ENCODE measurements at regions of chr20 and their contacts with region 1.

Region 1: DNA sequence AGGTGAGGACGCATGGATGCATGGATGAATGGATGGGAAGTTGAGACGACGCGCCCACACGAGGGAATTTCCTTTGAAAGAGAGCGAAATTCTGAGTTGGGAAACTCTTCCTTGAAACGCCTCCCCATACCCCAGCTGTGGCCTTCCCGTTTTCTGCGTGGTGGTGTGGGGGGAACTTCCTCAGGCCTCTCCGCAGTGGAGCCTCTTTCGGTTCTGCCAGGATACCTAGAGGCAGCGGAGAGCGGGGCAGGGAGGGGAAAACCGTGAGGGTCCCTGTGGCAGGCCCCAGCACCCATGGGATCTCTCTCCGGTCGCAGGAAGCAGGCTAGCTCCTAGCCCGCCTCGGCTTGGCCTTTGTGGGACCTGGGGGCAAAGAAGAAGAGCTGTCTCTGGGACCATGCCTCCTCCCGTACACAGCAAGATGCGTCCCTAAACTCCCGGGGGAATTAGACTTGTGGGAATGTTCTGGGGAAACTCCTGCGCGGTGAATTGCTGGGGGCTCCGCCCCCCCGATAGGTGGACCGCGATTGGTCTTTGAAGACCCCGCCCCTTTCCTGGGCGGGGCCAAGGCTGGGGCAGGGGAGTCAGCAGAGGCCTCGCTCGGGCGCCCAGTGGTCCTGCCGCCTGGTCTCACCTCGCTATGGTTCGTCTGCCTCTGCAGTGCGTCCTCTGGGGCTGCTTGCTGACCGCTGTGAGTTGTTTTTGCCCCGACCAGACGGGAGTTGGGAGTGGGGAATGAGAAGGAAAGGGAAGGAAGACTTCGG is at the start of gene CD40:
- DNase-seq: peak; percentile 94
- ATAC-seq: peak; percentile 77
- H3K4me3 ChIP-seq: peak within 1 kb of the TSS; percentile 65 to 93 (median 83)
- H3K4me3 Mint-ChIP-seq: peak within 1 kb of the TSS; percentile 100
- H3K27ac ChIP-seq: peak within 1 kb of the TSS; percentile 99 to 100
- H3K27ac Mint-ChIP-seq: peak within 1 kb of the TSS; percentile 100
- H3K4me1 ChIP-seq: peaks cover 35 to 49% of the 10 kb centered on the region in 2 donors
- H3K4me1 Mint-ChIP-seq: peaks cover 54% of the 10 kb centered on the region
- H3K27me3 ChIP-seq: no peaks in the 10 kb centered on the region
- H3K27me3 Mint-ChIP-seq: no peaks in the 10 kb centered on the region
- CTCF ChIP-seq: no peak
- total RNA-seq, gene CD40: 206 and 210 TPM in 2 replicates

Region 2: GRCh38 chr20:45798935-45799642 is 318.8 kb before region 1 on chr20:
- CTCF ChIA-PET with region 1: no interaction called
- POLR2A ChIA-PET with region 1: no interaction called
- intact Hi-C with region 1: loop called (anchors 10 kb)
- DNase-seq: peak; percentile 72
- ATAC-seq: peak; percentile 83
- H3K4me3 ChIP-seq: no peak overlapping the region
- H3K4me3 Mint-ChIP-seq: no peak overlapping the region
- H3K27ac ChIP-seq: peak overlapping the region; percentile 8 to 16
- H3K27ac Mint-ChIP-seq: peak overlapping the region; percentile 0
- H3K4me1 ChIP-seq: peaks cover 3 to 10% of the 10 kb centered on the region in 2 donors
- H3K4me1 Mint-ChIP-seq: peaks cover 8% of the 10 kb centered on the region
- H3K27me3 ChIP-seq: no peaks in the 10 kb centered on the region
- H3K27me3 Mint-ChIP-seq: no peaks in the 10 kb centered on the region
- CTCF ChIP-seq: peak; percentile 83

Region 3: GRCh38 chr20:46089417-46090388 is 28.2 kb before region 1 on chr20 and contains the start of gene NCOA5:
- CTCF ChIA-PET with region 1: interaction called, 4 read pairs
- POLR2A ChIA-PET with region 1: interaction called, 3 read pairs
- intact Hi-C with region 1: loop called (anchors 1 kb)
- DNase-seq: peak; percentile 97
- ATAC-seq: peak; percentile 92
- H3K4me3 ChIP-seq: peak within 1 kb of the TSS; percentile 71 to 86 (median 81)
- H3K4me3 Mint-ChIP-seq: peak within 1 kb of the TSS; percentile 93
- H3K27ac ChIP-seq: peak within 1 kb of the TSS; percentile 71 to 94
- H3K27ac Mint-ChIP-seq: peak within 1 kb of the TSS; percentile 90
- H3K4me1 ChIP-seq: peaks cover 21 to 38% of the 10 kb centered on the region in 2 donors
- H3K4me1 Mint-ChIP-seq: peaks cover 47% of the 10 kb centered on the region
- H3K27me3 ChIP-seq: no peaks in the 10 kb centered on the region
- H3K27me3 Mint-ChIP-seq: no peaks in the 10 kb centered on the region
- CTCF ChIP-seq: peak; percentile 32
- total RNA-seq, gene NCOA5: 41.6 and 44.1 TPM in 2 replicates

Region 4: DNA sequence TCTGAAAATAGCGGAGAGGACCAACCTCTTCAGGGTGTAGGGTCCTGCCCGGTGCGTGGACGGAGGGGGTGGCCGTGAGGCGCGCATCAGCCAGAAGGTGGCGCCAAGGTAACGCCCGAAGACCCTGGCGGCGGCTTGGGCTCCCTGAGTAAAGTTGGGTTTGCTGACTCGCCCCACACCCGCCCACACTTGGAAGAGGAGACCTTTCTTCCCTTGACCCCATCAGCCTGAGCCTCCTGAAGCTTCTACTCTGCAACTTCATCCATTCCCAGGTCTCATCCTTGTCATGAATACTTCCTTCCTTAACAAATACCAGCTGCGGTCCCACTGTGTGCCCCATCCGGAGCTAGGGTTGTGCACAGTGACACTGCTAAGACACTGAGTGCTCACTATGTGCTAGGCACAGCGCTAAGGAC is 14.8 kb after region 1 on chr20:
- CTCF ChIA-PET with region 1: interaction called, 27 read pairs
- POLR2A ChIA-PET with region 1: interaction called, 11 read pairs
- intact Hi-C with region 1: loop called (anchors 1 kb)
- DNase-seq: peak; percentile 78
- ATAC-seq: peak; percentile 83
- H3K4me3 ChIP-seq: no peak overlapping the region
- H3K4me3 Mint-ChIP-seq: peak overlapping the region; percentile 4
- H3K27ac ChIP-seq: no peak overlapping the region
- H3K27ac Mint-ChIP-seq: peak overlapping the region; percentile 33
- H3K4me1 ChIP-seq: peaks cover 20 to 42% of the 10 kb centered on the region in 2 donors
- H3K4me1 Mint-ChIP-seq: peaks cover 48% of the 10 kb centered on the region
- H3K27me3 ChIP-seq: peaks cover 0 to 10% (median 0%) of the 10 kb centered on the region in 4 experiments
- H3K27me3 Mint-ChIP-seq: peaks cover 15% of the 10 kb centered on the region
- CTCF ChIP-seq: peak; percentile 87

Measured in B cell (primary cell).